ENCODE measurements at regions of chr2 and their contacts with region 1.

Region 1: GRCh38 chr2:85002534-85002933 is 31.6 kb downstream of the KCMF1 start:
- DNase-seq: no peak
- ATAC-seq: no peak
- H3K4me3 Mint-ChIP-seq: no peak overlapping the region
- H3K27ac Mint-ChIP-seq: no peak overlapping the region
- H3K4me1 Mint-ChIP-seq: peaks cover 61% of the 10 kb centered on the region
- H3K27me3 Mint-ChIP-seq: no peaks in the 10 kb centered on the region
- CTCF ChIP-seq: no peak

Region 2: DNA sequence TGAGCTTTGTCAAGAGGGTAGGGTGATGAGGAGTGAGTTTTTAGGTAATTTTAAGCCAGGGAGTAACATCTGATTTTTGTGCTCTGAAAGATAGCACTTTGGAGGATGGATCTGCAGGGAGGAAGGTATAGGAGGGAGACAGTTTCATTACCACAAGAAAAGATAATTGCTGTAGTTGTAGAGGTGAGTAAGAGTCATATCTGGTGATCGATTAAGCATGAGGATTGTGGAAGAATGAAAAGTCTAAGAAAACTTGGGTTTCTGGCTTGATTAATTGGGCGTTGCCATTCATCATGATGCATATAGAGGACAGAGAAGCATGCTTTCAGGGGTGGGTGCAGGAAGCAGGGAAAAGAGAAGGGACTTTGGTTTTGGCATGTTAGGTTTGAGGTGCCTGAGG is 13.1 kb before region 1 on chr2:
- CTCF ChIA-PET with region 1: interaction called, 3 read pairs
- POLR2A ChIA-PET with region 1: no interaction called
- intact Hi-C with region 1: loop called (anchors 1 kb)
- DNase-seq: no peak
- ATAC-seq: no peak
- H3K4me3 Mint-ChIP-seq: no peak overlapping the region
- H3K27ac Mint-ChIP-seq: no peak overlapping the region
- H3K4me1 Mint-ChIP-seq: peaks cover 31% of the 10 kb centered on the region
- H3K27me3 Mint-ChIP-seq: no peaks in the 10 kb centered on the region
- CTCF ChIP-seq: no peak

Measured in activated B cell treated with CpG ODN at 0.5 μM for 24 hours (primary cell).